Spleen (tissue), 13 donors: ENCODE measurements at regions of chr7 and their contacts with region 1.

Region 1: GRCh38 chr7:55019691-55020465 is 1.1 kb downstream of the EGFR start:
- DNase-seq: no peak
- H3K4me3 ChIP-seq: peak overlapping the region; percentile 49 to 76 (median 51)
- H3K27ac ChIP-seq: peak overlapping the region; percentile 14 to 93 (median 84)
- H3K4me1 ChIP-seq: peaks cover 0 to 29% (median 11%) of the 10 kb centered on the region in 6 donors
- H3K27me3 ChIP-seq: peaks cover 4 to 73% (median 20%) of the 10 kb centered on the region in 7 donors
- CTCF ChIP-seq: peak in 1 of 11 experiments; percentile 3
- POLR2A ChIP-seq: no peak

Region 2: GRCh38 chr7:55100544-55101301 is 80.8 kb after region 1 on chr7:
- intact Hi-C with region 1: loop called (anchors 10 kb)
- DNase-seq: no peak
- H3K4me3 ChIP-seq: no peak overlapping the region
- H3K27ac ChIP-seq: peak overlapping the region in 7 of 8 donors; percentile 23 to 50 (median 29)
- H3K4me1 ChIP-seq: peaks cover 0 to 20% (median 11%) of the 10 kb centered on the region in 6 donors
- H3K27me3 ChIP-seq: peaks cover 0 to 12% (median 0%) of the 10 kb centered on the region in 7 donors
- CTCF ChIP-seq: no peak
- POLR2A ChIP-seq: no peak

Region 3: DNA sequence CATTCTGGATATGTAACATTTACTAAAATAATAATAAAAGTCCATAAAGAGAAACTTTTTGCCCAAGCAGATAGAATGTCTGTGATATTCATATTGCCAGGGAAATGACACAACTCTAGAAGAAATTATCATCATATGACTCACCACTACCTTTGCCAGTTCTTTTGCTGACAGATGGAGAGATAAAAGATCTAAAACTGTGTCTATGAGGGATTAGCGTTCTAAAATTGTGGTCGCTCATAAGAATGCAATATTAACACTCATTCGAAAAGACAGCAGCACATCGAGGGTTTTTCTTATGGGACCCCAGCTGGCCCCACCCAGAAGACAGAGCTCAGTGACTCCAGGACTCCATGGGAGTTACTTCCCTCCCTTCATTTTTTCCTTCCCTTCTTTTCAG is 328.6 kb after region 1 on chr7:
- intact Hi-C with region 1: no loop called
- DNase-seq: no peak
- H3K4me3 ChIP-seq: no peak overlapping the region
- H3K27ac ChIP-seq: no peak overlapping the region
- H3K4me1 ChIP-seq: no peaks in the 10 kb centered on the region
- H3K27me3 ChIP-seq: peaks cover 0 to 31% (median 6%) of the 10 kb centered on the region in 7 donors
- CTCF ChIP-seq: no peak
- POLR2A ChIP-seq: no peak